ENCODE measurements at regions of chr13 and their contacts with region 1.

Region 1: GRCh38 chr13:23175920-23176319 is 4.9 kb upstream of the SGCG start:
- DNase-seq: peak in 2 of 5 donors; percentile 9 to 21
- H3K4me3 ChIP-seq: no peak overlapping the region
- H3K27ac ChIP-seq: no peak overlapping the region
- H3K4me1 ChIP-seq: no peaks in the 10 kb centered on the region
- H3K27me3 ChIP-seq: no peaks in the 10 kb centered on the region
- CTCF ChIP-seq: no peak

Region 2: GRCh38 chr13:22793598-22794134 is 382.3 kb before region 1 on chr13:
- intact Hi-C with region 1: loop called (anchors 10 kb)
- DNase-seq: peak in 3 of 5 donors; percentile 26 to 35 (median 33)
- H3K4me3 ChIP-seq: no peak overlapping the region
- H3K27ac ChIP-seq: no peak overlapping the region
- H3K4me1 ChIP-seq: no peaks in the 10 kb centered on the region
- H3K27me3 ChIP-seq: no peaks in the 10 kb centered on the region
- CTCF ChIP-seq: no peak

Region 3: DNA sequence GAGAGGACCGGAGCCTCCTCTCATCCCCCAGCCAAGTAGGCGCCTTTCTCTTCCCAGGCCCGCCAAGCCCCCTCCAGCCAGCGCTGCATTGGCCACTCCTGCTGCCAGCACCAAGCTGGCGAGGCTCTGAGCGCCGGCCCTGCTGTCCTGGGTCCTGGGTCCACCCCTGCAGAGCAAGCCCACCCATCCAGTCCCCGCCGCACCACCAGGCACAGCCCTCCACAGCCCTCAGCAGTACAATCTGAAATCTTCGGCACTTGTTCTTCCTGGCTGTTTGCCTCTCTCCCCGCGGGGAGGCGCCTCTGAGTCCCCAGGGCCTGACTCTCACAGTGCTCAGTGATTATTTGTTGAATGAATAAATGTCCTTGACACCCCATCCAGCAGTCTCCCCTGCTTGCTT is 231.5 kb before region 1 on chr13:
- intact Hi-C with region 1: no loop called
- DNase-seq: peak in 1 of 5 donors; percentile 63
- H3K4me3 ChIP-seq: no peak overlapping the region
- H3K27ac ChIP-seq: no peak overlapping the region
- H3K4me1 ChIP-seq: no peaks in the 10 kb centered on the region
- H3K27me3 ChIP-seq: no peaks in the 10 kb centered on the region
- CTCF ChIP-seq: no peak

Region 4: GRCh38 chr13:23039266-23039935 is 136.5 kb before region 1 on chr13:
- intact Hi-C with region 1: no loop called
- DNase-seq: no peak
- H3K4me3 ChIP-seq: no peak overlapping the region
- H3K27ac ChIP-seq: no peak overlapping the region
- H3K4me1 ChIP-seq: no peaks in the 10 kb centered on the region
- H3K27me3 ChIP-seq: no peaks in the 10 kb centered on the region
- CTCF ChIP-seq: no peak

Measured in kidney (tissue), 22 donors.